Ovary (tissue), 10 donors: ENCODE measurements at regions of chr12 and their contacts with region 1.

Region 1: DNA sequence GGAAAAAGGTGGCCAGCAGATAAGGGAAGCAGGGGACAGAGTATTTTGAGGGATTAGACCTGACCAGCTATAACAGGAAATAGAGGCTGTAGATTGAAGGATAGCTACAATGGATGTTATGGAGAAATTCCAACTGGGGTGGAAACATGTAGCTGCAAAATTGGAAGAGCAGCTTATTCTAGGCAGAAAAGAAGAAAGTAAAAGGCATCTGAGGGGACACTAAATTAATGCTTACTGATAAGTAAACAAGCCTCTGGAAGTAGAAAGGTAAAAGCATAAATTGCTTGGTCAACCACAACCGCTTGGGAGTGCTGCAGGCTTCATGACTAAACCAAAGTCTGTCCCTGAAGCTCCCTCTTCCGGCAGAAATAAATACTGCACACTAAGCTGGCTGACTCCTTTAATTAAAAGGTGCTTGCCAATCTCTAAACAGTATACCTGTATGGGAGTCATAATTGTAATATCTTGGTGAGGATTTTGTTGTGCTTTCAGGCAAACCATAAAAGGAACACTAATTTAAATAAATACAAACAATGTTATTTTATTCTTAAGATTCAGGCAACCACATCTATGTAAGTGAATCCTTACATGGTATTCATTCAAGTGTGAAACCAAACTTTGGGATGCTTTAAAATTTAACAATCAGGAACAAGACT is 7.7 kb downstream of the UBC start:
- DNase-seq: peak; percentile 74 to 93 (median 81)
- H3K4me3 ChIP-seq: no peak overlapping the region
- H3K27ac ChIP-seq: no peak overlapping the region
- H3K4me1 ChIP-seq: peaks cover 7% of the 10 kb centered on the region
- H3K27me3 ChIP-seq: no peaks in the 10 kb centered on the region
- CTCF ChIP-seq: peak; percentile 88 to 97 (median 96)
- EP300 ChIP-seq: no peak
- POLR2A ChIP-seq: no peak

Region 2: DNA sequence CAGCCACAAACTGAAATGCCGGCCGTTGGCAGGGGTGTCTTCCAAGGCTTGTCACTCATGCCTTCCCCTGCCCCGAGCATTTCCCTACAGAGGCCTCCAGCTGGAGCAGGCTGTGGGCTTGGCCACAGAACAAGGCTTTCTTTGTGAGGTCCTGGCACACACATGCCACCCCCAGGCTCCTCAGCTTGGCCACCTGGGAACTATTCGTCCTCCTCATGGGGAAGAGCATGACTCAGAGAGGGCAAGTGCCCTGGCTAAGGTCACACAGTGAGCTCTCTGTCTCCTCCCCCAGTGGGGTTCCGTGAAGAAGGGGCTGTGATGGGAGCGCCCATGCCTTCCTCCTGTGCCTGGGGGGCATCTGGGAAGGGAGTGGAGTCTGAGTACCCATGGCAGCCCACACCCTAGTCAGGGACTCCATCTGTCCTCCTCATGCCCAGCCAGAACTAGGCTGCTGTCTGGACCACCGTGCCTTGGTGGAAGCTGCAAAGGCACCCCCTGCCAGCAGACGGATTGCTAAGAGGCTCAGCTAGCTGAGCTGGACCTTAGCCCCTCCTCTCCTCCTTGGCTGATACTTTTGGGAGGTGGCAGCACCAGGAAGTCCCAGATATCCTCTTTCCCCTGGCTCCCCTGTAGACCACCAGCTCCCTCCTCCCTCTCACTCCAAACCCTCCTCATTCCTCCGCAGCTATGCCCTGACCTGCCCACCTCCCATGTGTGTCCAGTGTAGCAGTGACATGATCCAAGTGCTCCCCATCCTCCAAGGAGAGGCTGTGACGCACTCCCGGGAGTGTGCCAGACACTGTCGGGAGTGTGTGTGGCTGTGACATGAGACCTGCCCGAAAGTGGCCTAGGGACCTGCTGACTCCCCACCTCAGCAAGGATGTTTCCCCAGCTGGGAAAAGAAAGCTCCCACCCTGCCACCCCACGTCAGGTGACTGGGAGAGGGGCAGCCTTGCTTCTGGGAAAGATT is 1961.8 kb before region 1 on chr12:
- intact Hi-C with region 1: no loop called
- DNase-seq: no peak
- H3K4me3 ChIP-seq: no peak overlapping the region
- H3K27ac ChIP-seq: no peak overlapping the region
- H3K4me1 ChIP-seq: no peaks in the 10 kb centered on the region
- H3K27me3 ChIP-seq: no peaks in the 10 kb centered on the region
- CTCF ChIP-seq: no peak
- EP300 ChIP-seq: no peak
- POLR2A ChIP-seq: no peak

Region 3: DNA sequence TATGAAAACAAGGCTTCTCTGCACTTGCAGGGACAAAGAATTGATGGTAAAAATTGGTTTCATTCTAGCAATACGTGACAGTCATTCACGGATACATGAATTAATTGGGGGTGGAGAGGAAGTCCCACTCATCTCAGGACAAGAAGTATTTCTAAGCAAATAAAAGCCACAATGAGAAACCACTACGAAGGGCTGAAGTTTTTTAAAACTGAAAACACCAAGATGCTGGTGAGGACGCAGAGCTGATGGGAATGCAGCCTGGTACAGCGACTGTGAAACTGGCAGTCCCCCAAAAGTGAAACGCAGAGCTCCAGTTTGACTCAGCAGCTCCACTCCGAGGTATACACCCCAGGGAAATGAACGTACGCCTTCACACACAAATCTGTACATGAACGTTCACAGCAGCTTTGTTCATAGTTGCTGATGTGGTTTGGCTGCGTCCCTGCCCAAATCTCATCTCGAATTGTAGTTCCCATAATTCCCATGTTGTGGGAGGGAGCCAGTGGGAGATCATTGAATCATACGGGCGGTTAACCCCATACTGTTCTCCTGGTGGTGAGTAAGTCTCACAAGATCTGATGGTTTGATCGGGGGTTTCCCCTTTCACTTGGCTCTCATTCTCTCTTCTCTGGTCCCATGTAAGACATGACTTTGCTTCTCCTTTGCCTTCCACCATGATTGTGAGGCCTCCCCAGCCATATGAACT is 132.1 kb before region 1 on chr12:
- intact Hi-C with region 1: loop called in 2 of 4 experiments (anchors 5 to 10 kb)
- DNase-seq: peak; percentile 61 to 76 (median 64)
- H3K4me3 ChIP-seq: peak overlapping the region; percentile 3
- H3K27ac ChIP-seq: peak overlapping the region in 1 of 2 donors; percentile 50
- H3K4me1 ChIP-seq: peaks cover 7% of the 10 kb centered on the region
- H3K27me3 ChIP-seq: no peaks in the 10 kb centered on the region
- CTCF ChIP-seq: no peak
- EP300 ChIP-seq: no peak
- POLR2A ChIP-seq: no peak